ENCODE measurements at regions of chr2 and their contacts with region 1.

Region 1: DNA sequence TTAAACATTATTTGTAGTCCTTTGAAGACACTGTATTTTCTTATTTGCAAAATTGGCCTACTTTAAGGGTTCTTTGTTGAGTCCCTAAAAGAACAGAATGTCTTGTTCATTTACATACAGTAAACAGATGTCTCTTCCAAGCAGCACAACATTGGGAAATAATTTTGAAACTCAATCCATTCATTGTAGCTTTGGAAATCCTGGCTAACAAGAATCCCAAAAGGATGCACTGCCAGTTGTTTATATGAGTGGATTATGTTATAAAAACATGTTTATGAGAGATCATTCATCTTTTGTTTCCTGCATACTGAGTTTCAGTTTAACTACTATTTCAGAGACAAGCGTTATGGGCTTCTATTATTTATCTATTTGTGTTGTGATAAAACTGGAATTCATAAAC is 499.3 kb downstream of the PID1 start:
- DNase-seq: no peak
- H3K4me3 ChIP-seq: no peak overlapping the region
- CTCF ChIP-seq: no peak
- POLR2A ChIP-seq: no peak

Region 2: GRCh38 chr2:226887940-226888339 is 1883.8 kb before region 1 on chr2:
- intact Hi-C with region 1: loop called (anchors 5 kb)
- DNase-seq: no peak
- H3K4me3 ChIP-seq: no peak overlapping the region
- CTCF ChIP-seq: no peak
- POLR2A ChIP-seq: no peak

Region 3: GRCh38 chr2:228956701-228957474 is 185.1 kb after region 1 on chr2:
- intact Hi-C with region 1: no loop called
- DNase-seq: no peak
- H3K4me3 ChIP-seq: no peak overlapping the region
- CTCF ChIP-seq: no peak
- POLR2A ChIP-seq: no peak